PC-3 (cell line): ENCODE measurements at regions of chr2 and their contacts with region 1.

Region 1: GRCh38 chr2:27628767-27629709 is at the starts of genes CCDC121 and GPN1:
- DNase-seq: peak; percentile 96
- ATAC-seq: peak; percentile 95
- H3K4me3 ChIP-seq: peak within 1 kb of the TSS; percentile 87
- H3K27ac ChIP-seq: peak within 1 kb of the TSS; percentile 92
- H3K4me1 ChIP-seq: peaks cover 23% of the 10 kb centered on the region
- H3K27me3 ChIP-seq: no peaks in the 10 kb centered on the region
- CTCF ChIP-seq: no peak
- total RNA-seq, gene CCDC121: 0.87 and 2.7 TPM in 2 replicates
- total RNA-seq, gene GPN1: 40.9 and 46.8 TPM in 2 replicates

Region 2: GRCh38 chr2:27291865-27292264 is 337.2 kb before region 1 on chr2:
- CTCF ChIA-PET with region 1: no interaction called
- POLR2A ChIA-PET with region 1: interaction called, 12 read pairs
- intact Hi-C with region 1: no loop called
- DNase-seq: peak; percentile 48
- ATAC-seq: peak; percentile 11; the same call in 1 of the 2 replicates
- H3K4me3 ChIP-seq: no peak overlapping the region
- H3K27ac ChIP-seq: no peak overlapping the region
- H3K4me1 ChIP-seq: peaks cover 28% of the 10 kb centered on the region
- H3K27me3 ChIP-seq: no peaks in the 10 kb centered on the region
- CTCF ChIP-seq: peak; percentile 51

Region 3: GRCh38 chr2:27489498-27490397 is 139.3 kb before region 1 on chr2 and contains the start of gene IFT172:
- CTCF ChIA-PET with region 1: no interaction called
- POLR2A ChIA-PET with region 1: no interaction called
- intact Hi-C with region 1: loop called (anchors 1 kb)
- DNase-seq: peak; percentile 100
- ATAC-seq: peak; percentile 98
- H3K4me3 ChIP-seq: peak within 1 kb of the TSS; percentile 71
- H3K27ac ChIP-seq: 0 out of 2 replicates have a peak within 1 kb of the TSS, but pooled peaks have one; percentile 3
- H3K4me1 ChIP-seq: peaks cover 16% of the 10 kb centered on the region
- H3K27me3 ChIP-seq: no peaks in the 10 kb centered on the region
- CTCF ChIP-seq: no peak
- total RNA-seq, gene IFT172: 12.8 and 22.9 TPM in 2 replicates

Region 4: GRCh38 chr2:27551514-27551913 is 77.5 kb before region 1 on chr2:
- CTCF ChIA-PET with region 1: no interaction called
- POLR2A ChIA-PET with region 1: no interaction called
- intact Hi-C with region 1: loop called (anchors 2 kb)
- DNase-seq: no peak
- ATAC-seq: no peak
- H3K4me3 ChIP-seq: no peak overlapping the region
- H3K27ac ChIP-seq: no peak overlapping the region
- H3K4me1 ChIP-seq: peaks cover 23% of the 10 kb centered on the region
- H3K27me3 ChIP-seq: no peaks in the 10 kb centered on the region
- CTCF ChIP-seq: no peak

Region 5: DNA sequence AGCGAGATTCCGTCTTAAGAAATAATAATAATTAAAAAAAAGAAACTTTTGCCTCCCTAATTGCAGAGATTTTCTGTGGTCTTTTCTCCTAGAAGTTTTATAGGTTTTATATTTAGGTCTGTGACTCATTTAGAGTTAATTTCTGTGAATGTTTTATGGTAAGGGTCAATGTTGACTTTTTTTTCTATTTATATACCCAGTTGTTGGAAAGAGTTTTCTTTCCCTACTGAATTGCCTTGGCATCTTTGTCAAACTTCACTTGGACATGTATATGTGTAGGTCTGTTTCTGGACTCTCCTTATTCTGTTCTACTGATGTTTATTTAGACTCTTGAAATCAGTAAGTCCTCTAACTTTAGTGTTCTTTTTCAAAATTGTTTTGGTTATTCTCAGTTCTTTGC is 40.7 kb before region 1 on chr2:
- CTCF ChIA-PET with region 1: no interaction called
- POLR2A ChIA-PET with region 1: no interaction called
- intact Hi-C with region 1: no loop called
- DNase-seq: no peak
- ATAC-seq: peak; percentile 48
- H3K4me3 ChIP-seq: no peak overlapping the region
- H3K27ac ChIP-seq: no peak overlapping the region
- H3K4me1 ChIP-seq: peaks cover 9% of the 10 kb centered on the region
- H3K27me3 ChIP-seq: no peaks in the 10 kb centered on the region
- CTCF ChIP-seq: no peak